ENCODE measurements at regions of chr13 and their contacts with region 1.

Region 1: GRCh38 chr13:75219479-75220237 is 262.3 kb downstream of the TBC1D4 start:
- DNase-seq: peak; percentile 67 to 91 (median 80)
- ATAC-seq: peak; percentile 99
- H3K4me3 ChIP-seq: no peak overlapping the region
- H3K4me3 Mint-ChIP-seq: peak overlapping the region; percentile 63
- H3K27ac ChIP-seq: no peak overlapping the region
- H3K27ac Mint-ChIP-seq: no peak overlapping the region
- H3K4me1 ChIP-seq: no peaks in the 10 kb centered on the region
- H3K4me1 Mint-ChIP-seq: peaks cover 6% of the 10 kb centered on the region
- H3K27me3 ChIP-seq: peaks cover 4 to 6% of the 10 kb centered on the region in 2 experiments
- H3K27me3 Mint-ChIP-seq: peaks cover 18% of the 10 kb centered on the region
- CTCF ChIP-seq: peak; percentile 96

Region 2: DNA sequence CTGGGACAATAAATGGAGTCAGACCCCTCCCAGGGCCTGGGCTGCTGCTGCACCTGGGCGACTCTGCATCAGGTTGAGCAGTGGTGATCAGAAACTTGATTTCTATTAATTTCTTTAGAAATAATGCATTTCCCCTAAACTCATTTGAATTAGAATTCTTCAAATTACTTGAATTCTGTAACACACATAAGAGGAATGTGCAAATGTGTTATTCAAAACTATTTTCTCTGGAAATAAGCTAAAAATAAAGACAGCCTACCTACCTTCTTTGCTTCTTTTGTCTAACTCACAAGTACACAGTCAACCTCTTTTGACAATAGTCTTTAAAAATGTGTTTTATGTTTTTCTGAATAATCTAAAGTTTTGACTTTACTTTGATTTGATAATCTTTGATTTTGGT is 1518.5 kb before region 1 on chr13:
- CTCF ChIA-PET with region 1: no interaction called
- POLR2A ChIA-PET with region 1: no interaction called
- intact Hi-C with region 1: loop called in 1 of 2 experiments (anchors 2 kb)
- DNase-seq: no peak
- ATAC-seq: no peak
- H3K4me3 ChIP-seq: no peak overlapping the region
- H3K4me3 Mint-ChIP-seq: no peak overlapping the region
- H3K27ac ChIP-seq: peak overlapping the region in 1 of 2 experiments; percentile 55
- H3K27ac Mint-ChIP-seq: no peak overlapping the region
- H3K4me1 ChIP-seq: peaks cover 24% of the 10 kb centered on the region
- H3K4me1 Mint-ChIP-seq: peaks cover 33% of the 10 kb centered on the region
- H3K27me3 ChIP-seq: no peaks in the 10 kb centered on the region
- H3K27me3 Mint-ChIP-seq: no peaks in the 10 kb centered on the region
- CTCF ChIP-seq: no peak

Region 3: DNA sequence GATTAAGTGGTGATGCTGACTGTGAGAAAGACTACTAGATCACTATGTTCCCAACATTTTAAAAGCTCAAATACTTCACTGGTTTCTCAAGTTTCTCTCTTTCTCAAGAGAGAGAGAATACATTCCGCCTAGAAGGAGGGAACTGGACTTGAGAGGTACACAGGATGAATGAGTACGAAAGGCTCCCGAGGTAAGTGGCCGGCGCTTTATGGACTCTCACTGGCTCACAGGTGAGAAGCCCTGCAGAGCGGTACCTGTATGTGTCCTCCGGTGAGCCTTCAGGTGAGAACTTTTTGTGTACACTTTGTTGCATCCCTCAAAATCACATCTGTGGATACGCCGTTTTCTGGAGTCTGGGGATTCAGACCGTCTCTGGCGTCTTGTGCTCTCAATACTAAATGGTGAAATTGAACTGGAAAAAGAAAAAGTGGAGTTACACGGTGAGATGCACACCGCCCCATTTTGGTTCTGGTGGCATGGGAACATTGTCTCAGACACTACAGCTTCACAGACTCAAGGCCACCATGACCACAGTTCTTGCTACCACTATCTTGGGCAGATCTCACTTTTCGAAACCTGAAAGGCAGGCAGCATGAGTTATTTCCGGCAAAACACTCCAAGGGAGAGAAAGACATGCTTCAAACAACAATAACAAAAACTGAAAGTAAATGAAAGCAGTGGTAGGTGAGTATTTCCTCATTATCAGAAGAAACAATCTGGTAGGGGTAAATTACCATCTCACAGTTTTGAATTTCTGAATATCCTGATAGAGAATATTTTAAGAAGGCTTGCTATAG is 1504.3 kb before region 1 on chr13:
- CTCF ChIA-PET with region 1: interaction called, 6 read pairs
- POLR2A ChIA-PET with region 1: no interaction called
- intact Hi-C with region 1: loop called (anchors 5 to 10 kb)
- DNase-seq: peak in 8 of 9 experiments; percentile 35 to 94 (median 58)
- ATAC-seq: peak; percentile 84
- H3K4me3 ChIP-seq: peak overlapping the region in 1 of 2 experiments; percentile 15
- H3K4me3 Mint-ChIP-seq: peak overlapping the region; percentile 67
- H3K27ac ChIP-seq: peak overlapping the region; percentile 22 to 84
- H3K27ac Mint-ChIP-seq: peak overlapping the region; percentile 94
- H3K4me1 ChIP-seq: peaks cover 37% of the 10 kb centered on the region
- H3K4me1 Mint-ChIP-seq: peaks cover 46% of the 10 kb centered on the region
- H3K27me3 ChIP-seq: no peaks in the 10 kb centered on the region
- H3K27me3 Mint-ChIP-seq: no peaks in the 10 kb centered on the region
- CTCF ChIP-seq: no peak

Region 4: GRCh38 chr13:73722120-73722519 is 1497.5 kb before region 1 on chr13:
- CTCF ChIA-PET with region 1: interaction called, 3 read pairs
- POLR2A ChIA-PET with region 1: no interaction called
- intact Hi-C with region 1: loop called (anchors 5 to 10 kb)
- DNase-seq: peak in 2 of 9 experiments; percentile 17 to 42
- ATAC-seq: peak; percentile 55
- H3K4me3 ChIP-seq: no peak overlapping the region
- H3K4me3 Mint-ChIP-seq: no peak overlapping the region
- H3K27ac ChIP-seq: peak overlapping the region in 1 of 2 experiments; percentile 12
- H3K27ac Mint-ChIP-seq: peak overlapping the region; percentile 34
- H3K4me1 ChIP-seq: peaks cover 9% of the 10 kb centered on the region
- H3K4me1 Mint-ChIP-seq: peaks cover 35% of the 10 kb centered on the region
- H3K27me3 ChIP-seq: no peaks in the 10 kb centered on the region
- H3K27me3 Mint-ChIP-seq: no peaks in the 10 kb centered on the region
- CTCF ChIP-seq: peak; percentile 23

Region 5: GRCh38 chr13:73835138-73835721 is 1384.4 kb before region 1 on chr13:
- CTCF ChIA-PET with region 1: no interaction called
- POLR2A ChIA-PET with region 1: no interaction called
- intact Hi-C with region 1: loop called (anchors 1 to 2 kb)
- DNase-seq: peak in 2 of 9 experiments; percentile 56 to 69
- ATAC-seq: peak; percentile 69
- H3K4me3 ChIP-seq: no peak overlapping the region
- H3K4me3 Mint-ChIP-seq: no peak overlapping the region
- H3K27ac ChIP-seq: no peak overlapping the region
- H3K27ac Mint-ChIP-seq: no peak overlapping the region
- H3K4me1 ChIP-seq: peaks cover 23% of the 10 kb centered on the region
- H3K4me1 Mint-ChIP-seq: peaks cover 66% of the 10 kb centered on the region
- H3K27me3 ChIP-seq: no peaks in the 10 kb centered on the region
- H3K27me3 Mint-ChIP-seq: no peaks in the 10 kb centered on the region
- CTCF ChIP-seq: peak; percentile 90

Region 6: DNA sequence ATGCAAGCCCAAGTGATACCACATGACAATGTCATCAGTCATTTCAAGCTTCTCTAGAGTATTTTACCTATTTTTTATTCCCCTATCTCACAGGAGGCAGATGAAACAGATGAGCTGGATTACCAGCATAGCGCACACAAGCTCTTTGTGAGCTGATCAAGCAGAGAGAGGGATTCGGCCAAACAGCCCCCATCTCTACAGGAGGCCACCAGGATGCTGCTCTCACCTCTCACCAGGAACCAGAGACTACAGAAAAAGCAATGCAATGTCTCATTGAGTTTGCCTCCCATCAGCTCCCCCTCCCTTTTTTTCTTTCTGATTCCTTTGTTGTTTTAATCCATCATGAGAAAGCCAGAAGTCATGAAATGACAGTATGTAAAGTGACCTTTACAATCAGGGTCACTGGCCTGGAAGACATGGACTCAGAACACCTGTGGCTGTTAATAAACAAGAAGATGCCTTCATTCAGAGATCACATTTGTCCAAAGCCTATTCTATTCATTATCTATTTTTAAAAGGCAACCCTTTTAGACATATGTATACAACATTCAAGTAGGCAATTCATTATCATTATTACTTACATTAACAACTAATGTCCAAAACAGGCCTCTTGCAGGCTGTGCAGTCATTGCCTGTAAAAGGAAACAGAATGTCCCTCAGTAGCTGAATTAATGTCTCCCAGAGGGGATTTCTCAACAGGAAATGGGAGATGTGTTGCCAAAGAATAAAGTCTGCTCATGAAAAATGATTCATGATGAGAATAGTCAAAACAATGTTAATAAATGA is 394.3 kb before region 1 on chr13:
- CTCF ChIA-PET with region 1: no interaction called
- POLR2A ChIA-PET with region 1: no interaction called
- intact Hi-C with region 1: no loop called
- DNase-seq: no peak
- ATAC-seq: no peak
- H3K4me3 ChIP-seq: no peak overlapping the region
- H3K4me3 Mint-ChIP-seq: no peak overlapping the region
- H3K27ac ChIP-seq: no peak overlapping the region
- H3K27ac Mint-ChIP-seq: no peak overlapping the region
- H3K4me1 ChIP-seq: no peaks in the 10 kb centered on the region
- H3K4me1 Mint-ChIP-seq: no peaks in the 10 kb centered on the region
- H3K27me3 ChIP-seq: no peaks in the 10 kb centered on the region
- H3K27me3 Mint-ChIP-seq: no peaks in the 10 kb centered on the region
- CTCF ChIP-seq: no peak

Region 7: GRCh38 chr13:75202981-75203380 is 16.7 kb before region 1 on chr13:
- CTCF ChIA-PET with region 1: interaction called, 12 read pairs
- POLR2A ChIA-PET with region 1: no interaction called
- intact Hi-C with region 1: no loop called
- DNase-seq: no peak
- ATAC-seq: no peak
- H3K4me3 ChIP-seq: no peak overlapping the region
- H3K4me3 Mint-ChIP-seq: no peak overlapping the region
- H3K27ac ChIP-seq: no peak overlapping the region
- H3K27ac Mint-ChIP-seq: no peak overlapping the region
- H3K4me1 ChIP-seq: no peaks in the 10 kb centered on the region
- H3K4me1 Mint-ChIP-seq: no peaks in the 10 kb centered on the region
- H3K27me3 ChIP-seq: no peaks in the 10 kb centered on the region
- H3K27me3 Mint-ChIP-seq: peaks cover 7% of the 10 kb centered on the region
- CTCF ChIP-seq: no peak